T-cell (primary cell): ENCODE measurements at regions of chr12 and their contacts with region 1.

Region 1: GRCh38 chr12:11555743-11556625 is 93.5 kb upstream of the ETV6 start:
- DNase-seq: peak in 28 of 35 experiments; percentile 8 to 72 (median 39)
- ATAC-seq: peak; percentile 61 to 83 (median 70)
- H3K4me3 ChIP-seq: peak overlapping the region; percentile 1 to 13
- H3K4me3 Mint-ChIP-seq: peak overlapping the region; percentile 70 to 75 (median 71)
- H3K27ac ChIP-seq: peak overlapping the region; percentile 31
- H3K27ac Mint-ChIP-seq: peak overlapping the region; percentile 76 to 81
- H3K4me1 ChIP-seq: peaks cover 4 to 15% of the 10 kb centered on the region in 2 experiments
- H3K4me1 Mint-ChIP-seq: peaks cover 23 to 26% (median 24%) of the 10 kb centered on the region in 3 donors
- H3K27me3 ChIP-seq: peaks cover 0 to 2% of the 10 kb centered on the region in 2 experiments
- H3K27me3 Mint-ChIP-seq: peaks cover 0 to 1% of the 10 kb centered on the region in 2 donors

Region 2: DNA sequence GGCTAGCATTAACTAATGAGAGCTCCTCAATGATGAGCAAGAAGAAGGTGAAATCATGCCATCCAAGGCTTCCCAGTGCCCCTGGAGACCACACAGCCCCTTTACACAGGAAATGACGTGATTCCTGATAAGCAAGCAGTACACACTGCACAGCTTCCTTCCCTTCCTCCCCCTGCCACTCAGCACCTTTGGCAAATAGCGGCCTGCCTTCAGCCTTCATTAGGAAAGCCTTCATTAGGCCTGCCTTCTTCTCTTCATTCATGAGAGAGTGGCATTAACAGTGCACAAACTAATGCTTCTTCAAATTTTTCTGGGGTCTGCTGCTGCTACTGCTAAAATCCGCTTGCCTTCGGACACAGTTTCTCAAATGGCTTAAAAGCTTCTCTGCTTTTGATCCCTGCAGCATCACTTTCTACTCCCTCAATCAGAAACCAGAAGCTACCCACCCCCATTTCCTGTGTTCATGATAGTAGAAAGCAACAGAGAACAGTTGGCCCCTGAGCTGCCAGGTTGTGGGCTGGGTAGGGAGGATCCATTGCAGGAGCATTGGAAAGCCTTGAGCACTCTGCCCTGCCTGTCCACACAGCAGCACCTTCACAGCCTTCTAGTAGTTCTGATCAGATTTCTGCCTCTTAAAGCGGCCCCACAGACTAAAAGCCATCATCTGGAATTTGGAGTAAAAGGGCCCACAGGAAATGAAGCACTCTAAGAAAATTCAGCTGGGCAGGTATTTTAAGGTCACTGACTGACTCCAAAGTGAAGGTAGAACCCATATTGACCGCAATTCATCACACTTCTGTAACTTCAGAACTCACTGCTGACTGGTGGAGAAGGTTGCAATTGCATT is 10.3 kb before region 1 on chr12:
- CTCF ChIA-PET with region 1: interaction called, 5 to 19 read pairs
- POLR2A ChIA-PET with region 1: interaction called in 1 of 2 experiments, 3 read pairs
- DNase-seq: peak; percentile 30 to 81 (median 59)
- ATAC-seq: peak; percentile 85 to 88 (median 86)
- H3K4me3 ChIP-seq: peak overlapping the region; percentile 27 to 30
- H3K4me3 Mint-ChIP-seq: peak overlapping the region; percentile 57 to 79 (median 59)
- H3K27ac ChIP-seq: peak overlapping the region; percentile 94
- H3K27ac Mint-ChIP-seq: peak overlapping the region; percentile 93 to 98
- H3K4me1 ChIP-seq: peaks cover 53 to 59% of the 10 kb centered on the region in 2 experiments
- H3K4me1 Mint-ChIP-seq: peaks cover 66 to 69% (median 66%) of the 10 kb centered on the region in 3 donors
- H3K27me3 ChIP-seq: no peaks in the 10 kb centered on the region
- H3K27me3 Mint-ChIP-seq: no peaks in the 10 kb centered on the region